CD4-positive, alpha-beta memory T cell (primary cell): ENCODE measurements at regions of chr21 and their contacts with region 1.

Region 1: DNA sequence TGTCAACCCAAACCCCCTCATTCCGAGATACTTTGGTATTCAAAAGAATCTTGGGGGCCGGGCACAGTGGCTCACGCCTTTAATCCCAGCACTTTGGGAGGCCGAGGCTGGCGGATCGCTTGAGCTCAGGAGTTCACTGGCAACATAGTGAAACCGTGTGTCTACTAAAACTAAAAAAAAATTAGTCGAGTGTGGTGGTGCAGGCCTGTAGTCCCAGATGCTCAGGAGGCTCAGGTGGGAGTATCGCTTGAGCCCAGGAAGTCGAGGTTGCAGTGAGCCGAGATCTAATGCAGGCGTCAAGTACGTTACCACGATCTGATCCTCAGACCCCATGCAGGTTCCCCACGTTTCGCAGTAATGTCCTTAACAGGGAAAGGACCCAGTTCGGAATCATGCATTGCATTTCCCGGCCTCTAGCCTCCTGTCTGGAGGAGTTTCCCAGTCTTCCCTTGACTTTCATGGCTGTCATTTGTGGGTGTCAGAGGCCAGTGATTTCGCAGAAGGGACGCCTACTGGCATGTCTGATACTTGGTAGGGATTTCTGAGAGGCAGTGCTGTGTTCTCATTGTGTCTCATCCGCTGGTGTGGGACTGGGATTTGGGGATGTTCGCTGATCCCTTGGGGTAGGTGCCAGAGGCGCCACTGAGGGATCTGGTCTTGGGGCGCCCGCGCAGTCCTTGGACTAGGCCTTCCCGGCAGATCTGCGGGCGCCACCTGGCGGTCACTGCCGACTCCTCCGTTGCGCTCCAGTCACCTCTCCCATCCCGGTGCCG is 39.3 kb upstream of the HMGN1 start:
- DNase-seq: peak; percentile 82 to 86 (median 83)
- H3K4me3 ChIP-seq: peak overlapping the region; percentile 33 to 54
- H3K4me3 Mint-ChIP-seq: peak overlapping the region; percentile 88 to 95 (median 89)
- H3K27ac ChIP-seq: peak overlapping the region; percentile 66
- H3K27ac Mint-ChIP-seq: peak overlapping the region; percentile 88 to 96 (median 95)
- H3K4me1 ChIP-seq: peaks cover 37% of the 10 kb centered on the region
- H3K4me1 Mint-ChIP-seq: peaks cover 11 to 45% (median 29%) of the 10 kb centered on the region in 4 donors
- H3K27me3 ChIP-seq: no peaks in the 10 kb centered on the region
- H3K27me3 Mint-ChIP-seq: no peaks in the 10 kb centered on the region

Region 2: DNA sequence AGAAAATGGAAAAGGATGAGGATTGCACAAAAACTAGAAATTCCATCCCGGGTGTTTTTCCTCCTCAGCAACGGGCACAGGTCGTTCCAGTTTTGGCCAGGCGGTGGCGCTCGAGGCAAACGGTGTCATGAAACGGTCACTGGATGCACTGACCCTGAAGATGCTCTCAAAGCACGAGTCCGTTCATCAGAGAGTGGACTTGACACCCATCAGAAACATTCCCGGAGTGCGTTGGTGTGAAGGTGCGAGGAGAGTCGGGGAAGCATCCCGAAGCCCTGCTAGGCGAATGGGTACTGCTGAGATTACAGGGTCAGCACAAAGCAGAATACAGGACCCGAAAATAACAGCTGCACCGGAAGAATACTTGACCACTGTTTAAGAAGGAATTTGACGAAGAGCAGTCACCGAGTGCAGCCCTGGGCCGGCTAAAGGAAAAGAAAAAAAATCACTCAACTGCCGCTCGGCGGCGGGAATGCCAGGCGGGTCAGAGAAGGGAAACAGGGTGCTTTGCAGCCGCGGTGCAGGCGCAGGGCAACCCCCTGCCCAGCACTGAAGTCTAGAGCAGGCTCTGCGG is 654.2 kb before region 1 on chr21:
- CTCF ChIA-PET with region 1: no interaction called
- POLR2A ChIA-PET with region 1: no interaction called
- intact Hi-C with region 1: loop called (anchors 1 kb)
- DNase-seq: peak; percentile 35 to 64 (median 51)
- H3K4me3 ChIP-seq: peak overlapping the region in 1 of 2 donors; percentile 53
- H3K4me3 Mint-ChIP-seq: peak overlapping the region; percentile 60 to 89 (median 74)
- H3K27ac ChIP-seq: no peak overlapping the region
- H3K27ac Mint-ChIP-seq: no peak overlapping the region
- H3K4me1 ChIP-seq: peaks cover 8% of the 10 kb centered on the region
- H3K4me1 Mint-ChIP-seq: peaks cover 5 to 10% (median 7%) of the 10 kb centered on the region in 4 donors
- H3K27me3 ChIP-seq: peaks cover 3% of the 10 kb centered on the region
- H3K27me3 Mint-ChIP-seq: peaks cover 13 to 20% of the 10 kb centered on the region in 2 donors

Region 3: DNA sequence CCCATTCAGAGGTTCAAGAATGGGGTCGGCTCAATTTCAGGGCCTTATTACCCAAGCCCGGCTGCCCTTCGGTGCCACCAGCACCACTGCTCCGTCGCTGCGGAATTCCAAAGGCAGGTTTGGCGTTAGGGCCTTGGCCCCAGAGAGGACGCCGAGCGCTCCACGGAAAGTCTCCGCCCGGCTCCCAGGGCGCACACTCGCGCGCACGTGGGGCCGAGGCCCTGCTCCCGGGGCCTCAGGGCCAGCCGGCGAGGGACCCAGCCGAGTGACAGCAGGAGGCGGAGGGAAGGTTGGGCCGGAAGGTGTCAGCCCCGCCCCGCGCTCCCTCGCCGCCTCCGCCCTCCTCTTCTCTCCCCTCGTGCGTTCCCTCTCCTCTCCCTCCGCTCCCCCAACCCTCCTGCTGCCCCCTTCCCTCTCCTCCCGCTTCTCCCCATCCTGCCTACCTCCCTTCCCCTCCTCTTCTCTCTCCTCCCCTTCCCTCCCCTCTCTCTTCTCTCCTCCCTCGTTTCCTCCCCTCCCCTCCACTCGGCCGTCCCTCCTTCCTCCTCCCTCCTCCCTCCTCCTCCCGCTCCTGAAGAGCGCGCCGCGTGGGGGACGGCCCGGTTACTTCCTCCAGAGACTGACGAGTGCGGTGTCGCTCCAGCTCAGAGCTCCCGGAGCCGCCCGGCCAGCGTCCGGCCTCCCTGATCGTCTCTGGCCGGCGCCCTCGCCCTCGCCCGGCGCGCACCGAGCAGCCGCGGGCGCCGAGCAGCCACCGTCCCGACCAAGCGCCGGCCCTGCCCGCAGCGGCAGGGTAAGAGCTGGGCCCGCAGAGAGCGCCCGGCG is 582.7 kb before region 1 on chr21 and contains the start of gene ETS2:
- CTCF ChIA-PET with region 1: no interaction called
- POLR2A ChIA-PET with region 1: no interaction called
- intact Hi-C with region 1: loop called (anchors 2 kb)
- DNase-seq: peak; percentile 59 to 79 (median 65)
- H3K4me3 ChIP-seq: peak within 1 kb of the TSS; percentile 62 to 82
- H3K4me3 Mint-ChIP-seq: peak within 1 kb of the TSS; percentile 87 to 94 (median 90)
- H3K27ac ChIP-seq: peak within 1 kb of the TSS; percentile 59
- H3K27ac Mint-ChIP-seq: peak within 1 kb of the TSS; percentile 65 to 95 (median 83)
- H3K4me1 ChIP-seq: peaks cover 32% of the 10 kb centered on the region
- H3K4me1 Mint-ChIP-seq: peaks cover 24 to 35% (median 30%) of the 10 kb centered on the region in 4 donors
- H3K27me3 ChIP-seq: no peaks in the 10 kb centered on the region
- H3K27me3 Mint-ChIP-seq: no peaks in the 10 kb centered on the region
- total RNA-seq, gene ETS2: 14.6 to 15.2 TPM

Region 4: GRCh38 chr21:39114871-39115575 is 273.2 kb before region 1 on chr21:
- CTCF ChIA-PET with region 1: no interaction called
- POLR2A ChIA-PET with region 1: no interaction called
- intact Hi-C with region 1: no loop called
- DNase-seq: no peak
- H3K4me3 ChIP-seq: no peak overlapping the region
- H3K4me3 Mint-ChIP-seq: no peak overlapping the region
- H3K27ac ChIP-seq: no peak overlapping the region
- H3K27ac Mint-ChIP-seq: peak overlapping the region in 1 of 7 donors; percentile 25
- H3K4me1 ChIP-seq: no peaks in the 10 kb centered on the region
- H3K4me1 Mint-ChIP-seq: no peaks in the 10 kb centered on the region
- H3K27me3 ChIP-seq: no peaks in the 10 kb centered on the region
- H3K27me3 Mint-ChIP-seq: peaks cover 3 to 7% of the 10 kb centered on the region in 2 donors

Region 5: DNA sequence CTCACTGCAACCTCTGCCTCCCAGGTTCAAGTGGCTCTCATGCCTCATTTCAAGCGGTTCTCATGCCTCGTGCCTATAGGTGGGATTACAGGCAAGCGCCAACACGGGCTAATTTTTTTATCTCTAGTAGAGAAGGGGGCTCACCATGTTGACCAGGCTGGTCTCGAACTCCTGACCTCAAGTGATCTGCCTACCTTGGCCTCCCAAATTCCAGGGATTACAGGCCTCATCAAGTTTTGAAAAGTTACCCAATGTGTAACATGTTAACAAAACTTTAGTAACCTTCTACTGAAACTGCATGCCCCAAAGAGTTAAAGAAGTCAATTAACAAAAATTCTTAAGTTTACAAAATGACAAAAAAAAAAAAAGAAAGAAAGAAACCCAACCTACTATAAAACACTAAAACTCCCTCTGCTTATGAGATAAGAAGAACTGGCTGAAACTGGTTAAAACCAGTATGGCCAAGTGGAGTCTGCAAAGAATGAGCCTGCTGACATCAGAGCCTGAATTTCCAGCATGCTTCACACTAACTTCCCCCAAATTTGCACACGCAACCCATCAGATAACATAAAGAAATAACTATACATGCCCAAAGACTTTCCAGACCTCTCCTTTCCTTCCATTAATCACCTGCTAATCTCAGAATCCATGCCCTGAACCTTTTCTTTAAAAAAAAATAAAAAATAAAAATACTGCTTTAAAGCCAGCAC is 179.4 kb before region 1 on chr21:
- CTCF ChIA-PET with region 1: interaction called, 6 read pairs
- POLR2A ChIA-PET with region 1: no interaction called
- intact Hi-C with region 1: loop called (anchors 5 kb)
- DNase-seq: peak in 1 of 5 donors; percentile 38
- H3K4me3 ChIP-seq: no peak overlapping the region
- H3K4me3 Mint-ChIP-seq: peak overlapping the region in 1 of 8 donors; percentile 40
- H3K27ac ChIP-seq: no peak overlapping the region
- H3K27ac Mint-ChIP-seq: peak overlapping the region; percentile 4 to 86 (median 62)
- H3K4me1 ChIP-seq: peaks cover 27% of the 10 kb centered on the region
- H3K4me1 Mint-ChIP-seq: peaks cover 26 to 44% (median 34%) of the 10 kb centered on the region in 4 donors
- H3K27me3 ChIP-seq: no peaks in the 10 kb centered on the region
- H3K27me3 Mint-ChIP-seq: no peaks in the 10 kb centered on the region

Region 6: GRCh38 chr21:39349211-39350093 is 38.8 kb before region 1 on chr21:
- CTCF ChIA-PET with region 1: interaction called, 14 read pairs
- POLR2A ChIA-PET with region 1: interaction called, 32 read pairs
- intact Hi-C with region 1: loop called (anchors 1 kb)
- DNase-seq: peak; percentile 96 to 97 (median 96)
- H3K4me3 ChIP-seq: peak overlapping the region; percentile 58 to 99
- H3K4me3 Mint-ChIP-seq: peak overlapping the region; percentile 92 to 98 (median 96)
- H3K27ac ChIP-seq: peak overlapping the region; percentile 84
- H3K27ac Mint-ChIP-seq: peak overlapping the region; percentile 98 to 99 (median 98)
- H3K4me1 ChIP-seq: peaks cover 45% of the 10 kb centered on the region
- H3K4me1 Mint-ChIP-seq: peaks cover 26 to 52% (median 33%) of the 10 kb centered on the region in 4 donors
- H3K27me3 ChIP-seq: no peaks in the 10 kb centered on the region
- H3K27me3 Mint-ChIP-seq: peaks cover 2% of the 10 kb centered on the region in 2 donors

Region 7: DNA sequence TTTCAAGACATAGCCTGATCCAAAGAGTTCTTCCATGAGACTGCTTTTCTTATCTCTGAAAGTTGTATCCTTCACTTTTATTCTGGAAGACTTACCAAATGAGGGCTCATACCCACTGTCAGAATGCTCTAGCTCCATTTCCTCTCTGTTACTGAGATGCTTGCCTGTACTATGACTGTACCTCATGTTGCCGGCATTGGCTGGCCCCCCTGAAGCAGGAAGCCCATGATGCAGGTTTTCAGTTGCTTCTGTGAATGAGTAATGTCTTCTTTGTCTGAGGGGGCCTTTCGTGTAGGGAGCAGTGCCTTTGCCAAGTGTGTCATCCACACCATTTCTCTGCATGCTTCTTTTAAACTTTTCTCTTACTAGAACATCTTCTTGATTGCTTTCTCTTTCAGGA is 17.8 kb after region 1 on chr21:
- CTCF ChIA-PET with region 1: no interaction called
- POLR2A ChIA-PET with region 1: no interaction called
- intact Hi-C with region 1: no loop called
- DNase-seq: no peak
- H3K4me3 ChIP-seq: no peak overlapping the region
- H3K4me3 Mint-ChIP-seq: no peak overlapping the region
- H3K27ac ChIP-seq: no peak overlapping the region
- H3K27ac Mint-ChIP-seq: no peak overlapping the region
- H3K4me1 ChIP-seq: no peaks in the 10 kb centered on the region
- H3K4me1 Mint-ChIP-seq: no peaks in the 10 kb centered on the region
- H3K27me3 ChIP-seq: no peaks in the 10 kb centered on the region
- H3K27me3 Mint-ChIP-seq: no peaks in the 10 kb centered on the region

Region 8: DNA sequence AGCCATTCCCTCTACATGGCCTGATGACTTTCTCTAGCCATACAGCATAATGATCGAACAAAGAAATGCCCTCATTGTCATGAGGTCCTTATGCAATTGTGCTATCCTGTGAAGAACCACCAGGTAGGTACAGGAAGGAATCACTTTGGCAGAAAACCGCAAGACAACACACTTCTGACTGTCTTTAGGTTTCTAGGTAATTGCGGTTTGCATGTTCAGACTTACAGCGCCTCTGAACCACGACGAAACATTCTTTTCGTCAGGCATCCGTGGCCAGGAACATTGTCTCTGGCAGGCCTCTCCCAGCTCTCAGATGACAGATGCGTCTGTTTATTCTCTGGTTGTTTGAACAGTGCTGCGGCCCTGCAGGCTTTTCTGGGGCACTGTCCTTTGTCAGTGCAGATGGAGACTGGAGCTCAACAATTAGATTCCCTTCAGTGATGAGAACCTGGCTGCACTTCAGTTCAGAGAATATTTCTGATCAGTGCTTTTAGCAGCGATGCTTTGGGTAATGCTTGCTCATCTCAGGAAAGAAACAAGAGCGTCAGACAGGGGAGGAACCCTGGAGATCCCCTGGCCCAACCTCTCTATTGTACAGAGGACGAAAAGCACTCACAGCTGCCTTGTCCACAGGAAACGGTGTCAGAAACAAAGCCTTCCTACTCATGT is 287.9 kb after region 1 on chr21:
- CTCF ChIA-PET with region 1: no interaction called
- POLR2A ChIA-PET with region 1: no interaction called
- intact Hi-C with region 1: no loop called
- DNase-seq: peak in 1 of 5 donors; percentile 5
- H3K4me3 ChIP-seq: no peak overlapping the region
- H3K4me3 Mint-ChIP-seq: peak overlapping the region in 1 of 8 donors; percentile 4
- H3K27ac ChIP-seq: no peak overlapping the region
- H3K27ac Mint-ChIP-seq: no peak overlapping the region
- H3K4me1 ChIP-seq: no peaks in the 10 kb centered on the region
- H3K4me1 Mint-ChIP-seq: no peaks in the 10 kb centered on the region
- H3K27me3 ChIP-seq: no peaks in the 10 kb centered on the region
- H3K27me3 Mint-ChIP-seq: peaks cover 2 to 9% of the 10 kb centered on the region in 2 donors